ENCODE measurements at regions of chr10 and their contacts with region 1.

Region 1: DNA sequence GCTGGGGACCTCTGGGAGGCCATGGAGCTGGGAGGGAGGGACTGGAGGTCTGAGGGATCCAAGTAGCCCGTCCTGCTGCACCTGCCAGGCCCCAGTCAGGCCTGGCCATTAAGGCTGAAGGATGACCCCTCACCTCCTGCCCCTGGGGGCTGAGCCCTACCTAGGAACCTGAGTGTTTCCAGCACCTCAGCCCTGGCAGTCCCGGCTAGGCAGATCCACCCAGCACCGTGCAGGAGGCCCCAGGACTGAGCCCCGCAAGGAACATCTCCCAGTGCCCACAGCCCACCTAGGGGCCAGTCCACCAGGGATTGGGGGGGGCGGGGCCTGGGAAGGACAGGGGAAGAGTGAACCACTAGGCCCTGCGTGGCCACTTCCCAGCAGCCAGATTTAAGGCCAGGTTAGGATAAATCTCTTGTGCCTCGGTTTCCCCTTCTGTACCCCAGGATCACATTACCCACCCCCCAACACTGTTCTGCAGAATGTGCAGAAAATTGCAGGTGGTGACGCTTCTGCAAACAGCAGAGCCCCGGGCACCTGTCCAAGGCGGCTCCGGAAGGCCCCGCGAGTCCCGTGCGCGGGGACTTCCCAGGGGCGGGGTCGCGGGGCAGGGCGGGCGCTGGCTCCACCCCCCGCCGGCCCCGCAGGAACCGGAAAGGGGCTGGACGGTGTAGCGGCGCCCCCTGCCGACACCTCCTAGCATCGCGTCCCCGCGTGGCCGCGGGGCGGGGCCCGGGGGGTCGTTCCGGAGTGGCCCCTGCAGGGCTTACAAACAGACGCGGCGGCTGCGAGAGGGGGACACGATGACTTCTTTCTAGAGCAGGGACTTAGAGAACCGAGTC is 55.9 kb downstream of the PWWP2B start:
- DNase-seq: peak; percentile 93
- ATAC-seq: peak; percentile 86 to 90
- H3K4me3 ChIP-seq: peak overlapping the region; percentile 28
- H3K27ac ChIP-seq: peak overlapping the region; percentile 47
- H3K4me1 ChIP-seq: peaks cover 33% of the 10 kb centered on the region
- H3K27me3 ChIP-seq: peaks cover 5% of the 10 kb centered on the region
- CTCF ChIP-seq: peak; percentile 96

Region 2: DNA sequence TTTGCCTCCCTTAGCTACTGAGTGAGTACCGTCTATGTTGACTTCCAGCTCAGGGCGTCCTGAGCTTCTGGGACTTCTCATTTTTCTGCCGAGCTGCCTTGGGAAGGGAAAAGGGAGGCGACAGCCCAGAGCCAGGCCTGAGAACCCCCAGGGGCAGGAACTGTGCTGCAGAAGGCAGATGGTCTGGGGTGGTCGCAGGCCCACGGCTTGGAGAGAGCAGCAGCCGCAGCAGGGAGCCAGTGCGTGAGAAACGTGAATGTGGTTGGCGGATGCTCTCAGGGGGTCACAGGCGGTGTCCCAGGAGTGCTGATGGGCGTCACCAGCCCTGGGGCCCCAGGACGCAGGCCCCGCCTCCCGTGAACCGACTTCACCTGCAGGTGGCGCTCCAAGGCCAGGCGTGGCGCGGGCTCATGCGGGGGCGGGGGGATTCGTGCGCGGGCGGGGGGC is 65.1 kb before region 1 on chr10:
- intact Hi-C with region 1: loop called (anchors 5 kb)
- DNase-seq: peak; percentile 87
- ATAC-seq: peak; percentile 73 to 80
- H3K4me3 ChIP-seq: peak overlapping the region; percentile 23
- H3K27ac ChIP-seq: no peak overlapping the region
- H3K4me1 ChIP-seq: peaks cover 14% of the 10 kb centered on the region
- H3K27me3 ChIP-seq: no peaks in the 10 kb centered on the region
- CTCF ChIP-seq: peak; percentile 70